ENCODE measurements at regions of chr4 and their contacts with region 1.

Region 1: DNA sequence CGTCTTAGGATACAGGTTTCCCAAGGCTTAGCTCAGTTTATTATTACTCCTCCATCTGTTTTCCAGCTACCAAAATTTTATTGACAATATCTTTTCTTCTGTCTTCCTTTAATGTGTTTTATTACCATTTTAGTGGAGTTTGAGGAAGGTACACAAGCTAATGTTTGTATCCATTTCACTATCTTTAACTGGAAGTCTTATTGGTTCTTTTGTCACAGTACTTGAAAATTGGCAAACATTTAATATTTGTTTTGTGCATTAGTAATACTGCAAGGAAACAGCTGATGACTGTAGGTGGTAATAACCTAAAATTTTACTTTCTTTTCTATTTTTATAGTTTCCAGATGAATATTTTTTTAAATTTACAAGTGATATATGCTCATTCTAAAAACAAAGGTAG is 9.3 kb upstream of the ARL9 start:
- DNase-seq: no peak
- ATAC-seq: no peak
- H3K4me3 ChIP-seq: no peak overlapping the region
- H3K27ac ChIP-seq: no peak overlapping the region
- H3K4me1 ChIP-seq: no peaks in the 10 kb centered on the region
- H3K27me3 ChIP-seq: no peaks in the 10 kb centered on the region
- CTCF ChIP-seq: no peak

Region 2: DNA sequence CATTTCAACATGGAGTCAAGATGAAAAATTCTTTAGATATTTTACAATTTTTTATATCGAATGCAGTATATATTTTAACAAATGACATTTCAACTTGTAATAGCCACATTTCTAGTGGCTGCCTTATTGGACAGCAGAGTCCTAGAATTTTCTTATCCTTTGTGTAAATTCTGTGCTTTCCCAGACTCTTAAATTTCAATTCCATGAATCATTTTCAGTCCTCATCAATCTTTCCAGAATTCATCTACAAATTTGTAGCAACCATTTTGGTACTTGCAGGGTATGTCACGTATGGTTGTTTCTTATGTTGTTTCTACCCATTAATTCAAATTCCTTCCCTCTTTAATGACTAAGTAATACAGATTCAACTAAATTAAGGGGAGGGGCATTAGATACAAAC is 57.5 kb before region 1 on chr4:
- intact Hi-C with region 1: no loop called
- DNase-seq: no peak
- ATAC-seq: no peak
- H3K4me3 ChIP-seq: no peak overlapping the region
- H3K27ac ChIP-seq: no peak overlapping the region
- H3K4me1 ChIP-seq: peaks cover 12% of the 10 kb centered on the region
- H3K27me3 ChIP-seq: no peaks in the 10 kb centered on the region
- CTCF ChIP-seq: no peak

Region 3: GRCh38 chr4:56999751-57000150 is 503.5 kb after region 1 on chr4:
- intact Hi-C with region 1: loop called in 1 of 2 experiments (anchors 10 kb)
- DNase-seq: no peak
- ATAC-seq: no peak
- H3K4me3 ChIP-seq: no peak overlapping the region
- H3K27ac ChIP-seq: no peak overlapping the region
- H3K4me1 ChIP-seq: peaks cover 9% of the 10 kb centered on the region
- H3K27me3 ChIP-seq: no peaks in the 10 kb centered on the region
- CTCF ChIP-seq: no peak